ENCODE measurements at regions of chr14 and their contacts with region 1.

Region 1: DNA sequence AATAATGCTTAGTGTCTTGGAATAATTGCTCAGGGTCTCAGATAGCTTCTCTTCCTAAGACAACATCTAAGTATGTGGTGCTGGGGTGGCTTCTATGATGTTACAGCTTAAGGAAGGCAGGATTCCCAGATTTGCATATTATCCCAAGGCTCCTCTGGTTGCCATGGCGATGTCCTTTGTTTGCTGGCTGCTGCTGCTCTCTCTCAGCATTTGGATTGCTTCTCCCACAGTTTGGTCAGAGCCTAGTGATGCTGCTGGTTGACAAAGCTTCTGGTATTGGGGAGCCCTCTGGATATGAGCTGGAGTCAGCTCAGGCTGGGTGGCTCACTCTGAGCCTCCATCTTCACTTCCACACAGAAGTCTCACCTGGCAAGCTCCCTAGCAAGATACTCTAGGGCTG is 56.4 kb upstream of the FBXO33 start:
- DNase-seq: no peak
- ATAC-seq: no peak
- H3K4me3 ChIP-seq: no peak overlapping the region
- H3K27ac ChIP-seq: no peak overlapping the region
- H3K4me1 ChIP-seq: no peaks in the 10 kb centered on the region
- H3K27me3 ChIP-seq: no peaks in the 10 kb centered on the region
- CTCF ChIP-seq: no peak
- EP300 ChIP-seq: no peak
- POLR2A ChIP-seq: no peak
- RAD21 ChIP-seq: no peak

Region 2: DNA sequence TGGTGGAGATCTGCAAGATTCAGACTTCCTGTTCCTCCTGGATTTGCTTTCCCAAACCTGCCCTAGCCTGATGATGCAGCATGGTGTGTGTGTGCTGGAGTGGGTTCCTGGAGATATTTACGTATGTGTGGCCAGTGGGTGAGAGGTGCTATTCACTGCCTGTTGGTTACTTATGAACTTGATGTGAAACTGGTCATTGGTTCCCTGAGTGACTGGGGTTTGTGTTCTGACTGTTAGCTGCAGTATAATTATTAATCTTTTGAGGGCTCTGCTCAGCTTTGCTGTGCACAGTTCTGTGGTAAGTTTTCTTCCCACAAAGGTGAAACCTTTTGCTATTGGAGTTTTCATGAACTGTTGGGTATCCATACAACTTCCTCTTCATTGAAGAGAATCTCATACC is 485.4 kb after region 1 on chr14:
- CTCF ChIA-PET with region 1: no interaction called
- POLR2A ChIA-PET with region 1: no interaction called
- RAD21 ChIA-PET with region 1: no interaction called
- SMC1A ChIA-PET with region 1: no interaction called
- in situ Hi-C with region 1: no loop called
- intact Hi-C with region 1: loop called (anchors 10 kb)
- DNase-seq: peak; percentile 76
- ATAC-seq: peak; percentile 98
- H3K4me3 ChIP-seq: no peak overlapping the region
- H3K27ac ChIP-seq: no peak overlapping the region
- H3K4me1 ChIP-seq: no peaks in the 10 kb centered on the region
- H3K27me3 ChIP-seq: no peaks in the 10 kb centered on the region
- CTCF ChIP-seq: no peak
- EP300 ChIP-seq: peak; percentile 92 to 96
- POLR2A ChIP-seq: no peak
- RAD21 ChIP-seq: no peak

Measured in GM12878 (cell line).